Activated CD4-positive, alpha-beta T cell treated with anti-CD3 and anti-CD28 coated beads, Interleukin-2, amount 10 ng/mL, durations not matched to agents 24 days and 14 days (primary cell): ENCODE measurements at regions of chr20 and their contacts with region 1.

Region 1: GRCh38 chr20:34768096-34768495 is 57.4 kb downstream of the NCOA6 start:
- DNase-seq: no peak
- H3K4me3 Mint-ChIP-seq: no peak overlapping the region
- H3K27ac Mint-ChIP-seq: no peak overlapping the region
- H3K4me1 Mint-ChIP-seq: no peaks in the 10 kb centered on the region
- H3K27me3 Mint-ChIP-seq: no peaks in the 10 kb centered on the region

Region 2: GRCh38 chr20:34538671-34539123 is 229.4 kb before region 1 on chr20:
- intact Hi-C with region 1: loop called (anchors 2 kb)
- DNase-seq: peak; percentile 90
- H3K4me3 Mint-ChIP-seq: no peak overlapping the region
- H3K27ac Mint-ChIP-seq: no peak overlapping the region
- H3K4me1 Mint-ChIP-seq: peaks cover 14% of the 10 kb centered on the region
- H3K27me3 Mint-ChIP-seq: no peaks in the 10 kb centered on the region